ENCODE measurements at regions of chrX and their contacts with region 1.

Region 1: DNA sequence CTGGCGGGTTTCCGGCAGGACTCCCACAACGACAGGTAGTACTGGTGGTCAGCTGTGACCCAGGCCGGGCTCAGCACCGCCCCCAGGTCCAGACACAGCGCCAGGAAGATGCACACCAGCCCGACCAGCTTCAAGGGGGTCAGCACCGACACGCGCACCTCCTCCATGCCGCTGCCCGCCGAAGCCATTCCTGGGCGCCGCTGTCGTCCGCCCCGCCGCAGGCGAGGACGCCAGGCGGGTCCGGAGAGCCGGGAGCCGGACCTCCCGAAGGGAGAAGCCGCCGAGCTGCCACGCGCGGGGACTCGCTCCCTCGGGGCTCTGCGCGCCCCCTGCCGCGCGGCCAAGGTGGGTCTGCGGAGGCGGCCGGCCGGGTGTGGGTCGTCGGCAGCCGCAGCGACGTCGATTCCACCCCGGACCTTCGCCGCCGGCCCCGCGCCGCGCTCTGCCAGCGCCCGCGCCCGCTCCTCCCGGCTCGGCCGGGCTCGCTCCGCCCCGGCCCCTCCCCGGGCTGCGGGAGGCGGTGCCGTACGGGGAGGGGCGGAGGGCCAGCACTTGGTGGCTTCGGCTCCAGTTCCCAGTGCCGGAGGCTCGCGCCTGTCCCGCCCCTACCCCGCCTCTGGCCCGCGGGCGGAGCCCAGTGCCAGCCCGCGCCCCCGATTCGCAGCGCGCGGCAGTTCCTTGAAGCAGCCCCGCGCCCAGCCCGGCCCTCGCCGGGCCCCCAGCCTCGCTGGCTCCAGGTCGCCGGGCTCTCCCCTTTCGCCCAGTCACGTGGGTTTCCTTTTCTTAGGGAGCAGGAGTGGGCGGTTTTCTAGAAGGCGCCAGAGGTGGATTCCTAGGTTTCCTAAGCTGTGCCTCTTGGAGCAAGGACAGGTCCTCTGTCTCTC is at the start of gene TMEM47:
- DNase-seq: peak; percentile 73
- H3K4me3 Mint-ChIP-seq: peak within 1 kb of the TSS; percentile 83
- H3K27ac Mint-ChIP-seq: peak within 1 kb of the TSS; percentile 61
- H3K4me1 Mint-ChIP-seq: peaks cover 11% of the 10 kb centered on the region
- H3K27me3 Mint-ChIP-seq: peaks cover 38% of the 10 kb centered on the region
- CTCF ChIP-seq: no peak
- total RNA-seq, gene TMEM47: 1.6 TPM in 2 replicates

Region 2: DNA sequence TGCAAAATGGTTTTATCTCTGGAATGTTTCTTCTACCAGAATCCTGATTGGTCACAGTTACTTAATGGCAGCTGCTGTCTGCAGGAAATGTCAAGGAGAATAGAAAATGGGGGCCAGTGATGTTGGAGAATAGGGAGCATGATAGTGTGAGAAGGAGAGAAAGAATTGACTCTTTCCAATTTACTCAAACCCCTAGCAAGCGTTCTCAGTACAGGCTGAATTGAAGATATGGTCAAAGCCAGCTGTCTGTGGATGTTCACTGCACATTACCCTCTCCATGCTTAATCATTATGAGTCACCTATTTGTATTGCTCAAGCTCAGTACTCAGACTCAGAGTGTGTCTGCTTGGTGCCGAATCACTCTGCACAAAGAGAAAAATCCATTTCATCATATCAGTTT is 227.7 kb after region 1 on chrX:
- CTCF ChIA-PET with region 1: interaction called, 3 read pairs
- POLR2A ChIA-PET with region 1: no interaction called
- intact Hi-C with region 1: loop called (anchors 10 kb)
- DNase-seq: peak; percentile 80
- H3K4me3 Mint-ChIP-seq: no peak overlapping the region
- H3K27ac Mint-ChIP-seq: no peak overlapping the region
- H3K4me1 Mint-ChIP-seq: no peaks in the 10 kb centered on the region
- H3K27me3 Mint-ChIP-seq: peaks cover 15% of the 10 kb centered on the region
- CTCF ChIP-seq: no peak

Measured in MCF 10A (cell line).